CD4-positive, alpha-beta memory T cell (primary cell): ENCODE measurements at regions of chr6 and their contacts with region 1.

Region 1: GRCh38 chr6:145963216-145964068 is 716 bp downstream of the SHPRH start:
- DNase-seq: peak in 3 of 5 donors; percentile 23 to 46 (median 38)
- H3K4me3 ChIP-seq: peak overlapping the region; percentile 76 to 95
- H3K4me3 Mint-ChIP-seq: peak overlapping the region; percentile 96 to 99 (median 98)
- H3K27ac ChIP-seq: peak overlapping the region; percentile 67
- H3K27ac Mint-ChIP-seq: peak overlapping the region; percentile 92 to 99 (median 99)
- H3K4me1 ChIP-seq: peaks cover 43% of the 10 kb centered on the region
- H3K4me1 Mint-ChIP-seq: peaks cover 30 to 67% (median 47%) of the 10 kb centered on the region in 4 donors
- H3K27me3 ChIP-seq: no peaks in the 10 kb centered on the region
- H3K27me3 Mint-ChIP-seq: no peaks in the 10 kb centered on the region

Region 2: GRCh38 chr6:145814501-145815308 is 148.7 kb before region 1 on chr6 and contains the start of gene FBXO30:
- CTCF ChIA-PET with region 1: interaction called, 5 read pairs
- POLR2A ChIA-PET with region 1: interaction called, 35 read pairs
- intact Hi-C with region 1: loop called (anchors 1 kb)
- DNase-seq: peak; percentile 85 to 92 (median 88)
- H3K4me3 ChIP-seq: peak within 1 kb of the TSS; percentile 74 to 79
- H3K4me3 Mint-ChIP-seq: peak within 1 kb of the TSS; percentile 93 to 98 (median 95)
- H3K27ac ChIP-seq: peak within 1 kb of the TSS; percentile 86
- H3K27ac Mint-ChIP-seq: peak within 1 kb of the TSS; percentile 96 to 97 (median 96)
- H3K4me1 ChIP-seq: peaks cover 51% of the 10 kb centered on the region
- H3K4me1 Mint-ChIP-seq: peaks cover 26 to 60% (median 30%) of the 10 kb centered on the region in 4 donors
- H3K27me3 ChIP-seq: no peaks in the 10 kb centered on the region
- H3K27me3 Mint-ChIP-seq: no peaks in the 10 kb centered on the region
- total RNA-seq, gene FBXO30: 7.5 to 8.0 TPM

Region 3: DNA sequence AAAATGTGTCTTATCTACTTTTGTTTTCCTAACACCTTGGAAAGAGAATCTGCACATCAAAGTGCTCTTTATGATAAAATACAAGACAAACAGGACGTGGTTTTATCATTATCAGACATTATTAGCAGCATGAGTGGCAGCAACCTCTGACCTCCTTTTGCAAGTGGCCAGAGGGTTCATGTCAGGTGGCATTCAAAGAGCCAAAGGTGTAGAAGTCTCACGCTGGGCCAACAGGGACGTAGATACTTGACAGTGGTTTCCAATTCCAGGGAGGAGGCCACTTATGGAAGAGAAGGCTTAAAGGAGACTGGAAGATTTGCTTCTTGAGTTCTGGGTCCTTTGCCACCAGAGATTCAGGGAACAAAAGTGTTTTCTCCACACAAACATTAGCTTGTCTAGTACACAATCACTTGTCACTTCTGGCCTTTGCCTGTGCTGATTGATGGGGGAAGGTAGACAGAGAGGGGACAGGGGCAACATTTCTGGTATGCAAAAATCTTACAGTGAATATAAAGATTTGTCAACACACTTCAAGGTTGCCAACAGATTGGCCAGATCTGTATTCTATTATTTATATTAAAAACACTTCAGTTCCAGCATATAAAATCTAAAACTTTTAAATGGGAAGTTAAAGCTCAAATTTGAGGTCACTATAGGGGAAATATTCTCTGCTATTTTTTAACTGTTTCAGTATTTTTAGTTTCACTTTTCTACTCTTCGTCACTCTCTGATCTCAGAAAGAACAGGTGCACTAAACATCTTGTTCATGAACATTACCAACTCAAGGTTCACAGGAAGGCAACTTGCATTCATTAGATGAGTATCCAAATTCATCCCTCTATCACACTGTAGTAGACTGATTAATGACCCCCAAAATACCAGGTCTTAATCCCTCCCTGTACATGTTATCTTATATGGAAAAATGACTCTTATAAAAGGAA is 96.7 kb before region 1 on chr6:
- CTCF ChIA-PET with region 1: no interaction called
- POLR2A ChIA-PET with region 1: interaction called, 13 read pairs
- intact Hi-C with region 1: loop called (anchors 5 kb)
- DNase-seq: peak in 2 of 5 donors; percentile 19 to 30
- H3K4me3 ChIP-seq: no peak overlapping the region
- H3K4me3 Mint-ChIP-seq: peak overlapping the region; percentile 53 to 84 (median 72)
- H3K27ac ChIP-seq: peak overlapping the region; percentile 42
- H3K27ac Mint-ChIP-seq: peak overlapping the region; percentile 70 to 93 (median 88)
- H3K4me1 ChIP-seq: peaks cover 38% of the 10 kb centered on the region
- H3K4me1 Mint-ChIP-seq: peaks cover 31 to 44% (median 35%) of the 10 kb centered on the region in 4 donors
- H3K27me3 ChIP-seq: no peaks in the 10 kb centered on the region
- H3K27me3 Mint-ChIP-seq: no peaks in the 10 kb centered on the region